CD4-positive, alpha-beta T cell (primary cell): ENCODE measurements at regions of chr1 and their contacts with region 1.

Region 1: DNA sequence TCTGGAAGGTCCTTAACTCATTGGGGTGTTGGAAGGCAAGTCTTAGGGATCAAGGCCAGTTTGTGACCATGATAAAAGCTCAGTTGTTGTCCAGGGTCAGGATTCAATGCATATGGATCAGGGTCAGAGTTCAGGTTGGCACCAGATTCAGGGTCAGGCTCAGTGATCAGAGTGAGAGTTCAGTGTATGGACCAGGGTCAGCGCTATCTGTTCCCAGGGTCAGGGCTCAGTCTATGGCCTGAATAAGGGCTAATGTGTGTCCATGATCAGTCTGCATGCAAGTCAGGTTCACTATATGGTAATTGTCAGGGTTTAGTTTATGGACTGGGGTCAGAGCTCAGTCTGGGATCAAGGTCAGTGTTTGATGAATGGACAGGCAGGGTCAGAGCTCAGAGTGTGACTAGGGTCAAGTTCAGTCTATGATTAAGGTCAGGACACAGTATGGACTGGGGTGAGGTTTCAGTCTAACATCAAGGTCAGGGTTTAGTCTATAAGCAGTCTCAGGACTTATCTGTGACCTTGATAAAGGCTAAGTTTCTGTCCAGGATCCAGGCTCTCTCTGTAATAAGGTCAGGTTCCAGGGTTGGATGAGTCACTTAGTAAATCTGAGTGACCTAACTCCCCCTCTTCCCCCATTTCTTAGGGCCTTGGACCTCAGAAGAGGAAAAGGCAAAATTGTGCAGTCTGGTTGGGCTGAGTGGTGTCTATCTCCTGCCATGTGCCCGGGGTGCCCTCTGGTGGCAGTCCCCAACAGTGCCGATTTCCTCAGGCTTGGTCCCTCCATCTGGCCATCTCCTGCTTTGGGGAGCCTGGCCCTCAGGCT is 23.8 kb downstream of the KNCN start:
- DNase-seq: peak; percentile 47 to 81 (median 64)
- ATAC-seq: peak; percentile 69
- H3K4me3 ChIP-seq: no peak overlapping the region
- H3K4me3 Mint-ChIP-seq: no peak overlapping the region
- H3K27ac ChIP-seq: no peak overlapping the region
- H3K27ac Mint-ChIP-seq: no peak overlapping the region
- H3K4me1 ChIP-seq: peaks cover 5% of the 10 kb centered on the region
- H3K4me1 Mint-ChIP-seq: no peaks in the 10 kb centered on the region
- H3K27me3 ChIP-seq: peaks cover 6 to 13% of the 10 kb centered on the region in 2 experiments
- H3K27me3 Mint-ChIP-seq: peaks cover 58% of the 10 kb centered on the region
- CTCF ChIP-seq: peak; percentile 76

Region 2: DNA sequence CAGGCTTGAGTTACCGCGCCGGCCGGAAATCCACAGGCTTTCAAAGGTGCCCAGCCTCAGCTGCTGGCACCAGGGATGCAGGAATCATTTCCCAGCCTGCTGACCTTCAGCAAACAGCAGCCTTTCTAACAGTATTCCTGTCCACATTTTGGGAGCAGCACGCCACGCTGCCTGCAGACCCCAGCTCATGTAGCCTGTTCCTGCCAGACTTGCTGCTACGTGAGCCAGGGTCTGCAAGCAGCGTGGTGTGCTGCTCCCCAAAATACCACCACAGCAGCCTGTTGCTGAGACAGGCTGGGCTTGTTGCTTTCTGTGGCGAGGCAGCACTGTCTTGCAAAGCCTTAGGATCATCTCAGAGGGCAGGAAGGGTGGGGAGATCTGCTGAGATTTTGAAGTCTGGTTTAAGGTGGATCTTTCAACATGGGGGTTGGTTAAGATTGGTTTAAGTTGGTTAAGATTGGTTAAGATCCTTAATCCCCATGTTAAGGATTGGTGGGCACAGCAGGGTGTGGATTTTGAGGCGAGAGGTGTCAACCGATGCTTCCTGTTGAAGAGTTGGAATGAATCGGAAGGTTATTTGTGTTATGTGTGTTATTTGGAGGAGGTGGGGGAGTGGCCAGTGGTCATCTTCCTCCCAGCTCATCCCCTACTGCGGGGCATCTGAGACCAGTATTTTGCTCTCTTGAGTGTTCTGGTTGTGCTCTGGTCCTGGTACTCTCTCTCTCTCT is 120.6 kb before region 1 on chr1:
- CTCF ChIA-PET with region 1: no interaction called
- POLR2A ChIA-PET with region 1: no interaction called
- intact Hi-C with region 1: loop called in 1 of 2 experiments (anchors 1 kb)
- DNase-seq: peak in 2 of 14 experiments; percentile 16 to 26
- ATAC-seq: no peak
- H3K4me3 ChIP-seq: no peak overlapping the region
- H3K4me3 Mint-ChIP-seq: no peak overlapping the region
- H3K27ac ChIP-seq: no peak overlapping the region
- H3K27ac Mint-ChIP-seq: no peak overlapping the region
- H3K4me1 ChIP-seq: peaks cover 14% of the 10 kb centered on the region
- H3K4me1 Mint-ChIP-seq: no peaks in the 10 kb centered on the region
- H3K27me3 ChIP-seq: no peaks in the 10 kb centered on the region
- H3K27me3 Mint-ChIP-seq: no peaks in the 10 kb centered on the region
- CTCF ChIP-seq: no peak

Region 3: DNA sequence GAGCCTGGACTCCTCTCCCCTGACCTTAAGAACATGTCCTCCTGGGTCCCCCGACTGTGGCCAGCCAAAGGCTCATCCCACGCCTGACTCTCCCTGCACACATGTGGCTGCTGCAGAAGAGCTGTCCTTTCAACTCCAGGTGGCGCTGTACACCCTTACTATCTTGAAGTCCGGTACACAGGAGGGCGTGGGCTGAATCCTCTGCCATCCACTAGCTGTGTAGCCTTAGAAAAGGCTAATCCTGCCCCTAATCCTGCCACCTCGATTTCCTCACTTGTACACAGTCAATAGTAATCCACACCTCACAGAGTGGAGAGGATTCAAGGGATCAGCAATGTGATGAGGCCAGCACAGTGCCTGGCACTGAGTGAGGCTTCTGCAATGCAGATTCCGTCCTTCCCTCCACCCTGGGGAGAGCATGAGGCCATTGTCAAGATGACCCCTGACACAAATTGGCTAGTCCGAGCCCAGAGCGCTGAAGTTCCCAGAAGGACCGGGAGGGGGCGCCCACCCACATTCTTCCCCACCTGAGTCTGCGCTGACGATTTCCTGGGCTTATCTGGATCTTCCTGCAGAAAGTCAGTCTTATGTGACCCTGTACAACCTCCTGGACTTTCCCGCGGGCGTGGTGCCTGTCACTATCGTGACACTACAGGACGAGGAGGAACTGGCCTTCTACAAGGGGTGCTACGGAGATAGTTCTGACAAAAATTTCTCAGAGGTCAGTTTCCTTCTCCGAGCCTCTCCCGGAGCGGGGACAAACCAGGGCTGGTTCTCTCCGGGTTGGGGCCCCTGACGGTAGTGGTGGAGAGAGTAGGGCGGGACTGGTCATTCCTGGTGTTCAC is 85.1 kb before region 1 on chr1:
- CTCF ChIA-PET with region 1: interaction called, 6 read pairs
- POLR2A ChIA-PET with region 1: interaction called, 3 read pairs
- intact Hi-C with region 1: loop called (anchors 1 kb)
- DNase-seq: peak; percentile 47 to 80 (median 62)
- ATAC-seq: peak; percentile 79
- H3K4me3 ChIP-seq: peak overlapping the region; percentile 49
- H3K4me3 Mint-ChIP-seq: peak overlapping the region; percentile 87
- H3K27ac ChIP-seq: no peak overlapping the region
- H3K27ac Mint-ChIP-seq: no peak overlapping the region
- H3K4me1 ChIP-seq: peaks cover 21% of the 10 kb centered on the region
- H3K4me1 Mint-ChIP-seq: peaks cover 20% of the 10 kb centered on the region
- H3K27me3 ChIP-seq: peaks cover 9 to 18% of the 10 kb centered on the region in 2 experiments
- H3K27me3 Mint-ChIP-seq: peaks cover 26% of the 10 kb centered on the region
- CTCF ChIP-seq: peak; percentile 92

Region 4: DNA sequence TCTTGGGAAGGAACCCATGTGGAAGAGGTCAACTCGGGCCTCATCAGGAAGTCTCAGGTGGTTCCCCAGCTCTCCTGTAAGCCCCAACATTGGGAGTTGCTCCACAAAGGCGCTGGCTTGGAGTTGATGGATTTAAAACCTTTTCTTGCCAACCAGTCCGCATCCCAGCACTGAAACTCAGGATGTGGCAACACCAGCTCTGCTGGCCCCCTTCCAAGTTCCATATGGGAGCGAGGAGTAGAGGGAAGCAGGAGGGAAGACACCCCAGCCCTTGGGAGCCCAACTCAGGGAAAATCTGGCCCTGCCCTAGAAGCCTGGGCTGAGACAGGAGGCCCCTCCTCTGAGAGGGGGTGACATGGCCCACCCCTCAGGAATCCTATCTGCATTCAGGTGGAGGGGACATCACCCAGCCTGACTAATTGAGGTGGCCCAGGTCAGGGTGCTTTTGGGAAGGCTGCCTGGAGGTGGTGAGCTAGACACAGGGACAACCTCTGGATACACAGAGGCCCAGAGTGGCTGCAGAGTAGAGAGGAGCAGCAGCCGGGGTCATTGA is 71.2 kb before region 1 on chr1:
- CTCF ChIA-PET with region 1: no interaction called
- POLR2A ChIA-PET with region 1: no interaction called
- intact Hi-C with region 1: no loop called
- DNase-seq: no peak
- ATAC-seq: no peak
- H3K4me3 ChIP-seq: no peak overlapping the region
- H3K4me3 Mint-ChIP-seq: no peak overlapping the region
- H3K27ac ChIP-seq: no peak overlapping the region
- H3K27ac Mint-ChIP-seq: no peak overlapping the region
- H3K4me1 ChIP-seq: no peaks in the 10 kb centered on the region
- H3K4me1 Mint-ChIP-seq: no peaks in the 10 kb centered on the region
- H3K27me3 ChIP-seq: peaks cover 14 to 23% of the 10 kb centered on the region in 2 experiments
- H3K27me3 Mint-ChIP-seq: peaks cover 58% of the 10 kb centered on the region
- CTCF ChIP-seq: no peak

Region 5: GRCh38 chr1:46477153-46477929 is 50.3 kb before region 1 on chr1:
- CTCF ChIA-PET with region 1: no interaction called
- POLR2A ChIA-PET with region 1: no interaction called
- intact Hi-C with region 1: loop called (anchors 1 to 5 kb)
- DNase-seq: peak; percentile 54 to 85 (median 66)
- ATAC-seq: peak; percentile 94
- H3K4me3 ChIP-seq: no peak overlapping the region
- H3K4me3 Mint-ChIP-seq: no peak overlapping the region
- H3K27ac ChIP-seq: no peak overlapping the region
- H3K27ac Mint-ChIP-seq: no peak overlapping the region
- H3K4me1 ChIP-seq: no peaks in the 10 kb centered on the region
- H3K4me1 Mint-ChIP-seq: no peaks in the 10 kb centered on the region
- H3K27me3 ChIP-seq: peaks cover 11 to 16% of the 10 kb centered on the region in 2 experiments
- H3K27me3 Mint-ChIP-seq: peaks cover 58% of the 10 kb centered on the region
- CTCF ChIP-seq: peak; percentile 79